CD4-positive, alpha-beta T cell (primary cell): ENCODE measurements at regions of chr12 and their contacts with region 1.

Region 1: DNA sequence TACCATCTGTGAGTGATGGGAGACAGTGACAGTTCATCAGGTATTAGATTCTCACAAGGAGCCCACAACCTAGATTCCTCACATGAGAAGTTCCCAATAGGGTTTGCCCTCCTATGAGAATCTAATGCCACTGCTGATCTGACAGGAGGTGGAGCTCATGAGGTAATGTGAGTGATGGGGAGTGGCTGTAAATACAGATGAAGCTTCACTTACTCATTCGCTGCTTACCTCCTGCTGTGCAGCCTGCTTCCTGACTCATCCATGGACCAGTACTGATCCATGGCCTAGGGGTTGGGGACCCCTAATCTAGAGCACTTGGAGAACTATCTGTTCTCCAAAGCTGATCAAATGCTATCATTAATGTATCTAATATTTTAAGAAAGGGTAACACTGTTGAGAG is 17.7 kb downstream of the CLEC2D start:
- DNase-seq: peak in 3 of 14 experiments; percentile 20 to 52 (median 45)
- ATAC-seq: peak; percentile 39
- H3K4me3 ChIP-seq: no peak overlapping the region
- H3K4me3 Mint-ChIP-seq: peak overlapping the region; percentile 7
- H3K27ac ChIP-seq: peak overlapping the region in 1 of 2 donors; percentile 35
- H3K27ac Mint-ChIP-seq: peak overlapping the region; percentile 81
- H3K4me1 ChIP-seq: peaks cover 41% of the 10 kb centered on the region
- H3K4me1 Mint-ChIP-seq: peaks cover 73% of the 10 kb centered on the region
- H3K27me3 ChIP-seq: no peaks in the 10 kb centered on the region
- H3K27me3 Mint-ChIP-seq: no peaks in the 10 kb centered on the region
- CTCF ChIP-seq: no peak

Region 2: GRCh38 chr12:9702255-9702654 is 15.0 kb after region 1 on chr12:
- CTCF ChIA-PET with region 1: interaction called, 10 read pairs
- POLR2A ChIA-PET with region 1: interaction called, 21 read pairs
- intact Hi-C with region 1: no loop called
- DNase-seq: peak in 12 of 14 experiments; percentile 28 to 89 (median 50)
- ATAC-seq: peak; percentile 71
- H3K4me3 ChIP-seq: peak overlapping the region; percentile 27
- H3K4me3 Mint-ChIP-seq: peak overlapping the region; percentile 69
- H3K27ac ChIP-seq: peak overlapping the region; percentile 55 to 77
- H3K27ac Mint-ChIP-seq: peak overlapping the region; percentile 90
- H3K4me1 ChIP-seq: peaks cover 24% of the 10 kb centered on the region
- H3K4me1 Mint-ChIP-seq: peaks cover 93% of the 10 kb centered on the region
- H3K27me3 ChIP-seq: no peaks in the 10 kb centered on the region
- H3K27me3 Mint-ChIP-seq: no peaks in the 10 kb centered on the region
- CTCF ChIP-seq: no peak

Region 3: DNA sequence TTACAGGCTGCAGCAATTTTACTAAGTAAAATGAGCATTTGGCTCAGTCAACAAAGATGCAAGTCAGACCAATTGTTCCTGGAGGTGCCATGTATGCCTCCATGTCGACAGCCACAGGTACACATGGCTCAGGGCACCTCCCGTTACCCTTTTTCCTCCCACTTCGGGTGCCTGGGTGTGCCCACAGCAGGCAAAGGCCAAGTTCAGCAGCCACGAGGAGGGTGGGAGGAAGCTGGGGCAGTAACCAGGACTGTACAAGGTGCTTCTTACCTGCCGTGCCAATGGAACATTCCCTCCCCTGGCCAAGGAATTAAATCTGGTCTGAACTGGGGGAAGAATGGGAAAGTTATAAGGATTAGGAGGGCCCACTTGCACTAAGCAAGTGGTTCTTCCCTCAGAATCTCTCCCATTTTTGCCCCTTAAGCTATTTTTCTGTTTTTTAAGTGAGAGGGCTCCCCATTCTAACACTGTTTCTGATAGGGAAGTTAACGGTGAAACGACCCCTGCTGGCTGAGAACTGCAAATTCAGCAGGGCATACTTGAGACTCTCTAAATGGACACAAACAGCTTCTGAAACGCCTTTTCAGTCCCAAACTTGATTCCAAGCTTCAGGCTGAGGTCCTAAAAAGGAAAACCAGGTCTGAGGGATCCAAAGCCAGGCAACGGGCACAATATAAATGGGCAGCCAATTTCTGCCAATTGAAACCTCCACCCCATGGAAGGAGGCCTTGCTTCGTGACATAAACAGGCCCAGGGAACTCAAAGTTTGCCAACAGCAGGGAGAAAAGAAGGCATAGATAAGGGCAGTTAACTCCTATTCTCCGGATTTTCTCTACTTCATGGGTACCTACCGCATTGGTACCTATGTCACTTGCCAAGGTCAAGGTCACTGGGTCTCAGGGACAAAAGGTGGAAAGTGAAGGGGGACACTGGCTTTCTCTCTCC is 20.9 kb after region 1 on chr12:
- CTCF ChIA-PET with region 1: interaction called, 10 read pairs
- POLR2A ChIA-PET with region 1: interaction called, 21 read pairs
- intact Hi-C with region 1: no loop called
- DNase-seq: peak; percentile 45 to 87 (median 60)
- ATAC-seq: peak; percentile 85
- H3K4me3 ChIP-seq: peak overlapping the region; percentile 30
- H3K4me3 Mint-ChIP-seq: peak overlapping the region; percentile 79
- H3K27ac ChIP-seq: peak overlapping the region; percentile 68 to 71
- H3K27ac Mint-ChIP-seq: peak overlapping the region; percentile 89
- H3K4me1 ChIP-seq: peaks cover 23% of the 10 kb centered on the region
- H3K4me1 Mint-ChIP-seq: peaks cover 79% of the 10 kb centered on the region
- H3K27me3 ChIP-seq: no peaks in the 10 kb centered on the region
- H3K27me3 Mint-ChIP-seq: no peaks in the 10 kb centered on the region
- CTCF ChIP-seq: peak; percentile 74

Region 4: DNA sequence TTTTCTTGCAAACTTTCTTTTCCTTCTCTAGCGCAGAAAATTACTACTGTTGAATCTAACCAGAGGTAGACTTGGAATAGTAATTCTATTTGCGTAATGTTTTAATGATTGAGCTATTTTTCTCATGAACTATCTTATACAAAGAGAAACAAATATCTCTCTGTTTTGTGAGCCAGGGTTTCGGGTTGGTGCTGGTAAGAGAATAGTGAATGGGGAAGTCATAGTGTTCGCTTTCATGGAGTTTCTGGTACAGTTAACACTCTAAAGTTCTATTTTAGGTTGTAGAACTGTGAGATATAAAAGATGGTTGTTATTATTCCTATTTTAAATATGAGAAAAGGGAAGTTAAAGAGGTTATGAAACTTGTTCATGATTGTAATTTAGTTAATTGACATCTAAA is 305.1 kb after region 1 on chr12:
- CTCF ChIA-PET with region 1: no interaction called
- POLR2A ChIA-PET with region 1: no interaction called
- intact Hi-C with region 1: no loop called
- DNase-seq: no peak
- ATAC-seq: no peak
- H3K4me3 ChIP-seq: no peak overlapping the region
- H3K4me3 Mint-ChIP-seq: no peak overlapping the region
- H3K27ac ChIP-seq: no peak overlapping the region
- H3K27ac Mint-ChIP-seq: no peak overlapping the region
- H3K4me1 ChIP-seq: no peaks in the 10 kb centered on the region
- H3K4me1 Mint-ChIP-seq: no peaks in the 10 kb centered on the region
- H3K27me3 ChIP-seq: no peaks in the 10 kb centered on the region
- H3K27me3 Mint-ChIP-seq: peaks cover 14% of the 10 kb centered on the region
- CTCF ChIP-seq: no peak